Heart left ventricle (tissue), 16 donors: ENCODE measurements at regions of chr15 and their contacts with region 1.

Region 1: GRCh38 chr15:46312133-46312740 is 677.4 kb downstream of the SQOR start:
- DNase-seq: peak in 4 of 5 donors; percentile 52 to 67 (median 59)
- ATAC-seq: peak; percentile 47 to 94 (median 85)
- H3K4me3 ChIP-seq: no peak overlapping the region
- H3K27ac ChIP-seq: no peak overlapping the region
- H3K4me1 ChIP-seq: peaks cover 0 to 21% (median 0%) of the 10 kb centered on the region in 12 donors
- H3K27me3 ChIP-seq: no peaks in the 10 kb centered on the region
- CTCF ChIP-seq: peak; percentile 81 to 96 (median 87)
- POLR2A ChIP-seq: no peak

Region 2: DNA sequence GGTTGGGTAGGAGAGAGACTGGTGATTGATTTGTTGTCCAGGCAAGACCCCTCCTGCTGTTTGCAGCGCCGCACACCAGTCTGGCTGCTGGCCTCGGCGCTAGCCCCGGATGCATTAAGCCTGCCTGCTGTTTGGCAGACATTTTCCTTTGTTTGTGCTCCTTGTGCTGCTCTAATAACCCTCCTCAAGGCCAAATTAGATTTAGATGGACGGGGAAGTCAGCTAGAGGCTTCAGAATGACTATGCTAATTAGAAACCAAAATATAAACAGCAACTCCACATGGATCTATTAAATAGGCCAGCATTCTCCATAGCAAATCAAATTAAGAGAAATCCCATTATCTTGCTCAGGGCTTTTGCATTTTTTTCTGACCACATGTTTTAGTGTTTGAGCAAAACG is 232.2 kb before region 1 on chr15:
- intact Hi-C with region 1: no loop called
- DNase-seq: peak in 1 of 5 donors; percentile 62
- ATAC-seq: peak in 1 of 4 donors; percentile 44
- H3K4me3 ChIP-seq: no peak overlapping the region
- H3K27ac ChIP-seq: peak overlapping the region in 1 of 12 donors; percentile 16
- H3K4me1 ChIP-seq: peaks cover 0 to 13% (median 2%) of the 10 kb centered on the region in 12 donors
- H3K27me3 ChIP-seq: no peaks in the 10 kb centered on the region
- CTCF ChIP-seq: no peak
- POLR2A ChIP-seq: no peak

Region 3: DNA sequence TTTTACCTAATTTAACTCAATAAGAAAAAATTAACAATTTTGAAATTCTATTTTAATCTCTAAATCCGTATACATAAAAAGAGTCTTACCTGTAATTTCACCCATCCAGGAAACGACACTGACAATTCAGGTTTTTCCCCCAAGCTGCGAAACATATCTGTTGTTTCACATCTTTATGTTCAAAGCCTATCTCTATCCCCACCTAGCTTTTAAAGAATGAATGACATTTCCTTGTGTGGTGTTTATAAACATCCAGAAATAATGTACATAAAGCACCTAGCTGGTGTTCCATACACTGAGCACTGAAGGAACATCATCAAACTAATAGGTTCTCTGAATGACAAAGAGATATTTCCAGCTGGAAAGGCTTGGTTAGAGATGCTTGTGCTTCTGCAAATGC is 190.4 kb after region 1 on chr15:
- intact Hi-C with region 1: loop called in 3 of 10 experiments (anchors 5 to 10 kb)
- DNase-seq: no peak
- ATAC-seq: no peak
- H3K4me3 ChIP-seq: no peak overlapping the region
- H3K27ac ChIP-seq: no peak overlapping the region
- H3K4me1 ChIP-seq: no peaks in the 10 kb centered on the region
- H3K27me3 ChIP-seq: no peaks in the 10 kb centered on the region
- CTCF ChIP-seq: peak in 7 of 12 donors; percentile 13 to 40 (median 25)
- POLR2A ChIP-seq: no peak

Region 4: GRCh38 chr15:46567968-46568367 is 255.7 kb after region 1 on chr15:
- intact Hi-C with region 1: no loop called
- DNase-seq: no peak
- ATAC-seq: no peak
- H3K4me3 ChIP-seq: no peak overlapping the region
- H3K27ac ChIP-seq: no peak overlapping the region
- H3K4me1 ChIP-seq: no peaks in the 10 kb centered on the region
- H3K27me3 ChIP-seq: no peaks in the 10 kb centered on the region
- CTCF ChIP-seq: no peak
- POLR2A ChIP-seq: no peak

Region 5: DNA sequence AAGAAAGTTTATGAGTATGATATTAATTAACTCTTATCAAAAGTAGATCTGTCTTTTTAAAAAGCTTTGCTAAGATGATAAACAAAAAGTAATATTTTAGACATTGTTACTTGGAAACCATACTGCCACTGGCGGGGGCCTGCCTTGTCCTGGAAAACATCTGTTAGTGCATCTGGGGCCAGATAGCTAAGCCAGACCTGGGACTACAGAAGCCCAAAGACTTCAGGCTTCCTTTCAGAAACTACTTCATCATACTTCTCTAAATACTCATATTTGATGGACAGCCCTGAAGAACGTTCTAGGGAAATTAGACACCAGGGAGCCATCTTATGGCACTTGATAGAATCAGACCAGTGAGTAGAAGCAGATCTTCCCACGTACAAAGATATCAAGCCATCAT is 609.7 kb after region 1 on chr15:
- intact Hi-C with region 1: loop called in 1 of 10 experiments (anchors 10 kb)
- DNase-seq: peak in 2 of 5 donors; percentile 20 to 37
- ATAC-seq: peak in 2 of 4 donors; percentile 29 to 39
- H3K4me3 ChIP-seq: no peak overlapping the region
- H3K27ac ChIP-seq: no peak overlapping the region
- H3K4me1 ChIP-seq: no peaks in the 10 kb centered on the region
- H3K27me3 ChIP-seq: no peaks in the 10 kb centered on the region
- CTCF ChIP-seq: no peak
- POLR2A ChIP-seq: no peak